Head of caudate nucleus (tissue), 42 donors: ENCODE measurements at regions of chr3 and their contacts with region 1.

Region 1: GRCh38 chr3:42749753-42750231 is 23.3 kb downstream of the CCDC13 start:
- DNase-seq: peak in 37 of 42 donors; percentile 38 to 87 (median 71)

Region 2: GRCh38 chr3:42581709-42582473 is 167.9 kb before region 1 on chr3 and contains the start of gene SEC22C:
- intact Hi-C with region 1: loop called (anchors 5 kb)
- DNase-seq: peak; percentile 94 to 99 (median 98)

Region 3: DNA sequence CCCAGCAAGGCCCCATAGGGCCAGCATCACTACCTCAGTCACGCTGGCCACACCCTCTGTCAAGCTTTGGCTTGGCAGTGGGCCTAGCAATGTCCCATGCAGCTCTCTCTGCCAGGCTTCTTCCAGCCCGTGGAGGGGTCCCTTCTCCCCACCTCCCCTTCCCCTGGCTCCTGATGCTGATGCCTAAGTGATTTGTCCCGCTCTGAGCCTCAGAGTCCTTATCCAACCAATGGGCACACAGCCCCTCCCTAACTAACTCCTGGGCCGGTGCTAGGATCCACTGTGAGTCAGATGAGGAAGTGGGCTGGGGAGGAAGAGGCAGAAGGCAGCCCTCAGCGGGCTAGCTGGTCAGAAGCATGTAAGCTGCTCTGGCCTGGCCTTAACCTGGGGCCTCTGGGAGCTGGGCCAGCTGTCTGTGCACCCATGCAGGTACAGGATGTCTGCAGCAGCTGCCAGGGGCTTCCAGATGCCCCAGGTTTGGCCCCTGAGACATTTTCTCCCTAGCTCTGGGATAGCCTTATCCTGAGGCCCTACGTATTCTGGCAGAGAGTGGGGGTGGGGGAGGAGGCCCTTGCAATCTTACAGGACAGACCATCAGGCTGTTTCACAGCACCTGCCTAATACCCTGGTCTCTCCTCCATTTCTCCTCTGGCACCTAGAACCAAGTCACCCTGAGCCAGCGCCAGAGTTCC is 97.0 kb before region 1 on chr3:
- intact Hi-C with region 1: loop called (anchors 5 kb)
- DNase-seq: peak in 24 of 42 donors; percentile 39 to 79 (median 60)